Panc1 (cell line): ENCODE measurements at regions of chr12 and their contacts with region 1.

Region 1: GRCh38 chr12:46364777-46365580 is 7.6 kb downstream of the SLC38A2 start:
- DNase-seq: no peak
- ATAC-seq: peak; percentile 41; the same call in 1 of the 2 replicates
- H3K4me3 ChIP-seq: peak overlapping the region; percentile 93 to 99; a peak in 3 of 4 replicates
- H3K27ac ChIP-seq: peak overlapping the region; percentile 82
- H3K4me1 ChIP-seq: peaks cover 95% of the 10 kb centered on the region
- H3K27me3 ChIP-seq: no peaks in the 10 kb centered on the region
- CTCF ChIP-seq: no peak

Region 2: GRCh38 chr12:45775964-45776363 is 589.0 kb before region 1 on chr12:
- CTCF ChIA-PET with region 1: no interaction called
- POLR2A ChIA-PET with region 1: no interaction called
- in situ Hi-C with region 1: no loop called
- intact Hi-C with region 1: no loop called
- DNase-seq: no peak
- ATAC-seq: no peak
- H3K4me3 ChIP-seq: no peak overlapping the region
- H3K27ac ChIP-seq: no peak overlapping the region
- H3K4me1 ChIP-seq: peaks cover 3% of the 10 kb centered on the region
- H3K27me3 ChIP-seq: no peaks in the 10 kb centered on the region
- CTCF ChIP-seq: no peak

Region 3: DNA sequence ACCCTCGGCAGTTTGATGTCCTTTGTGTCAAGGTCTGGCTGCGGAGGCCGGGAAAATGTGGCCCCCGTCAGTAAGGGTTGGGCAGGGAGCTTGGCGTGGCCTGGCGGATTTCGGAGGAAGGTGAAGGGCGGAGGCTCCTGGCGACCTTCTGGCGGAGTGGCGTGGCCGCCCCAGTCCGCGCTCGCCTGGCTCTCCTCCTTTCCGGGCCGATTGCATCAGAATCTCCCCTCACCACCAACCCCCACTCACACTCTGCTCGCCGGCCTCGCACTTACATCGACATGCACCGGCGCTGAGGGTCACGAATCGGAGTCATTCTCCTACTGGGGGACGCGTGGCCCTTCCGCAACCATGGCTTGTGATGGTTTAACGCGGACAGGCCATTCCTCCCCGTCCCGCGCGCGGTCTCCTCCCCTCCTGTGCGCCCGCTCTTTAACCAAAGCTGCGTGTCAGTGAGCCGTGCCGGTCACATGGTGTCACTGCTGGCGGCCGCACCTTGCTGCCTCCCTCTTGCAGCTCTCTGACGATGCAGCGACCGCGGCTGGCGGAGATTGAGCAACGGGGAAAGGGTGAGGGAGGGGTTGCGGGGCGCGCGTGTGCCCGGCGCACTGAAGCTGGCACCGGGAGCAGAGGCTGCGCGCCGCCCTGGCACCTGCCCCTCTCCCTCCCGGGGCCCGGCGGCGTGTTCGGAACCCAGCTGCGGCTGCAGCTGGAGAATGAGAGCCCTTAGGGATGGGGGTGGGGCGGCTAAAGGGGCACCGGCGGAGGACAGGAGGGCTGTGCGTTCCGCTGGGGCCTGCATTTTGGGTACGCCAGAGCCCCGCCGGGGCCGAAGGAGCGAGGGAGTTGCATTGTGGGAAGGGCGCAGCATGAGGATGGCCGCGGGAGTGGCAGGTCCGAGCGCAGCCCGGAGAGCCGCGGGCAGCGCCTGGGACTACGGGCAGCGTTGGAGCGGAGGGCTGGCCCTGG is 96.1 kb before region 1 on chr12 and contains the start of gene SLC38A1:
- CTCF ChIA-PET with region 1: no interaction called
- POLR2A ChIA-PET with region 1: no interaction called
- in situ Hi-C with region 1: no loop called
- intact Hi-C with region 1: loop called (anchors 10 kb)
- DNase-seq: no peak
- ATAC-seq: peak; percentile 85
- H3K4me3 ChIP-seq: peak within 1 kb of the TSS; percentile 97 to 98
- H3K27ac ChIP-seq: peak within 1 kb of the TSS; percentile 99
- H3K4me1 ChIP-seq: peaks cover 32% of the 10 kb centered on the region
- H3K27me3 ChIP-seq: no peaks in the 10 kb centered on the region
- CTCF ChIP-seq: no peak
- total RNA-seq, gene SLC38A1: 127 TPM

Region 4: GRCh38 chr12:46627686-46628085 is 262.7 kb after region 1 on chr12:
- CTCF ChIA-PET with region 1: no interaction called
- POLR2A ChIA-PET with region 1: no interaction called
- in situ Hi-C with region 1: no loop called
- intact Hi-C with region 1: no loop called
- DNase-seq: no peak
- ATAC-seq: no peak
- H3K4me3 ChIP-seq: no peak overlapping the region
- H3K27ac ChIP-seq: no peak overlapping the region
- H3K4me1 ChIP-seq: no peaks in the 10 kb centered on the region
- H3K27me3 ChIP-seq: no peaks in the 10 kb centered on the region
- CTCF ChIP-seq: no peak